Left cardiac atrium (tissue), 4 donors: ENCODE measurements at regions of chr12 and their contacts with region 1.

Region 1: DNA sequence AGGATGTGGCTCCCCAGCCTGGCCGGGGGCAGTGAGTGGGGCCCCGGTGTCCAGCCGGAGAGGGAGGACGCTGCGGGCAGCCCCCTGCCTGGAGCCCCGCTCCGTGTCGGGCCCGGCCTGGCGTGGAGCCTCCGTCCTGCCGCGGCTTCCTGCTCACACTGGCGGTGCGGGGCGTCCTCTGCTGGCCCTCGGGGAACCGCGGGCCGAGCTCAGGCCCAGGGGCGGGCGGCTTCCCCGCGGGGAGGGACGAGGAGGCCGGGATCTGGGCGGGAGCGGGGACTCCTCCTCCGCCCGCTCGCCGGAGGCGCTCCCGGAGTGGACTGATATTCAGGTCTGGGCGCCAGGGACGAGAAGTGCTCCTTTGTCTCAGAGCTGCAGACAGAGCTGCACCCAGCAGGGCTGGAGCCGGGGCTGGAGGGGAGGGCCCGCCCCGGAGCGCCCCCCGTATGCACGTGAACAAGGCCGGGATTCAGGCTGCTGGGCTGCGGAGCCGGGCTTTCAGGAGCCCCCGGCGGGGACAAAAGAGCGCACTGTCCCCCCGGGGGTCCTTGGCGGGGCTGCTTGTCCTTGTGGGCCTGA is 2.2 kb downstream of the MMP17 start:
- DNase-seq: peak; percentile 82
- ATAC-seq: peak; percentile 86 to 89

Region 2: GRCh38 chr12:131608740-131609690 is 221.4 kb before region 1 on chr12:
- intact Hi-C with region 1: no loop called
- DNase-seq: peak; percentile 78
- ATAC-seq: peak; percentile 91

Region 3: GRCh38 chr12:131747276-131748177 is 82.9 kb before region 1 on chr12:
- intact Hi-C with region 1: no loop called
- DNase-seq: no peak
- ATAC-seq: no peak

Region 4: GRCh38 chr12:131928711-131929580 is 98.5 kb after region 1 on chr12 and contains the start of gene PUS1:
- intact Hi-C with region 1: no loop called
- DNase-seq: peak; percentile 94
- ATAC-seq: peak; percentile 96 to 97
- total RNA-seq, gene PUS1: 7.7 to 19.2 TPM

Region 5: DNA sequence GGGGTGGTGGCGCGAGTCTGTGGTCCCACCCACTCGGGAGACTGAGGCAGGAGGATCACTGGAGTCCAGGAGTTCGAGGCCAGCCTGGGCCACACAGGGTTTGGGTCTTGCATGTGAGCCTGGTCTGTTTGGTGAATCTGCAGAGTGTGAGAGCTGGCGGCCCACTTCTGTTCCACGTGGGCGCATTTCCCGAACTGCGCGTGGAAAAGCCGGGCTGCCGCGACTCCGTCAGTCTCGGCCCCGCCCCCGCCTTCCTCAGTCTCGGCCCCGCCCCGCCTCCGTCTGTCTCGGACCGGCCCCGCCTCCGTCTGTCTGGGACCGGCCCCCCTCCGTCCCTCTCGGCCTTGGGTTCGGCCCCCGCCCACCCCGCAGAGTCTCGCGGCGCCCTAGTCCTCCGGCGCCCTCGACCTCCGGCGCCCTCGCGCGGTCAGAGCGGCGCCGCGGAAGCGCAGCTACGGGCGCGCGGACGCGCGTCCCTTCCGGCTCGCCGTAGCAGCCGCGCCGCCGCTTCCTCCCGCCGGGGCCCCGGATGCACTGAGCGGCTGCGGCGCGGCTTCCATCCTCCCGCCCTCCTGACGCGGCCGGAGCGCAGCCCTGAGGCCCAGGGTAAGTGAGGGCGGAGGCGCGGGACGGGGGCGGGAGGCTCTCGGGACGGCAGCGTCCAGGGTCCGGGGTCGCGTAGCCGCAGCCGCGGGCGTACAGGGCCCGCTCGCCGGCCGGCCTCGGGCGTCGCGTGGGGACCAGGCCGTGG is 119.2 kb after region 1 on chr12 and contains the start of gene EP400:
- intact Hi-C with region 1: loop called (anchors 10 kb)
- DNase-seq: peak; percentile 98
- ATAC-seq: peak; percentile 97 to 99
- total RNA-seq, gene EP400: 15.7 to 21.1 TPM

Region 6: GRCh38 chr12:131990066-131990979 is 159.9 kb after region 1 on chr12:
- intact Hi-C with region 1: loop called in 1 of 2 experiments (anchors 10 kb)
- DNase-seq: no peak
- ATAC-seq: no peak